ENCODE measurements at regions of chr1 and their contacts with region 1.

Region 1: GRCh38 chr1:67347688-67348472 is 40.2 kb downstream of the IL12RB2 start:
- DNase-seq: peak; percentile 61
- ATAC-seq: peak; percentile 91
- H3K4me3 ChIP-seq: no peak overlapping the region; the same call in 1 of the 2 replicates
- H3K27ac ChIP-seq: no peak overlapping the region
- H3K4me1 ChIP-seq: no peaks in the 10 kb centered on the region
- H3K27me3 ChIP-seq: peaks cover 4% of the 10 kb centered on the region
- CTCF ChIP-seq: peak; percentile 69
- POLR2A ChIP-seq: no peak
- RAD21 ChIP-seq: peak; percentile 70

Region 2: GRCh38 chr1:67285780-67286488 is 61.9 kb before region 1 on chr1:
- CTCF ChIA-PET with region 1: no interaction called
- POLR2A ChIA-PET with region 1: no interaction called
- dilution Hi-C with region 1: no loop called
- in situ Hi-C with region 1: no loop called
- intact Hi-C with region 1: no loop called
- DNase-seq: no peak
- ATAC-seq: no peak
- H3K4me3 ChIP-seq: no peak overlapping the region
- H3K27ac ChIP-seq: no peak overlapping the region
- H3K4me1 ChIP-seq: no peaks in the 10 kb centered on the region
- H3K27me3 ChIP-seq: peaks cover 1% of the 10 kb centered on the region
- CTCF ChIP-seq: no peak
- POLR2A ChIP-seq: no peak
- RAD21 ChIP-seq: no peak

Region 3: DNA sequence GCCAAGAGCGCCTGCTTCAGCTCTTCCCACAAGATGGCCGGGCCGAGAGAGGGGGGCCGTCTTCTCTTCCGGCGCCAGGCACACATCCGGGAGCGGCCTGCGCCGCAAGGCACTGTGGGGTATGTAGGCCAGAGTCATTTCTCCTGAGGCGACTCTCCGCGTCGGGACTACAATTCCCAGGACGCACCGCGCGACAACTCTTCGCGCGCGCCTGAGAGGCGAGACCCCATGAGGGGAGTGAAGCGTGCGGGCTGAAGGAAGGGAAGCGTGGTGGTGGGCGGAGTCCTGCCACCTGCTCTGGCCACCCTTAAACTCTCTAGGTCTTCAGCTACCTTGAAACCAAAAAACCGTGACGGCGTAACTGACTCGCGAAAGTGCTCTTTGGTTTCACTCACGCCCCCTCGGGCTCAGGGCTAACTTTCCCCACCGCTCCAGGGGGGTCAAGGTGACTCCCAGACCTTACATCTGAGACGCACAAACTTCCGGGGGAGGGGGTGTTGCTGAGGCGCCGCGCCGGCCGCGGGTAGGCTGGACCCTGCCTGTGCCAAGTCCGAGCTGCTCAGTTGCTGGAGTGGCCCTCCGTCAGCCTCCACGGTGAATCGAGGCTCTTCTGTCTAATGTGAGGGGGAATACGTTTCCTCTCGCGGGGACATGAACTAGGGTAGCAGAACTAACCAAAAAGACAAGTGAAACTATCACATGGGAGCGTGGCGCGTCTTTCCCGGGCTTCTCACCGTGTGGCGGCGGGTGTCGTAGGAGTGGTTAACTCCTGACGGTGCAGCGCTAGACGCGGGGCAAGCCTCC is 82.7 kb after region 1 on chr1 and contains the start of gene SERBP1:
- CTCF ChIA-PET with region 1: interaction called, 3 read pairs
- POLR2A ChIA-PET with region 1: no interaction called
- dilution Hi-C with region 1: no loop called
- in situ Hi-C with region 1: no loop called
- intact Hi-C with region 1: loop called (anchors 2 kb)
- DNase-seq: peak; percentile 96
- ATAC-seq: peak; percentile 95
- H3K4me3 ChIP-seq: peak within 1 kb of the TSS; percentile 99
- H3K27ac ChIP-seq: peak within 1 kb of the TSS; percentile 81
- H3K4me1 ChIP-seq: no peaks in the 10 kb centered on the region
- H3K27me3 ChIP-seq: no peaks in the 10 kb centered on the region
- CTCF ChIP-seq: no peak
- POLR2A ChIP-seq: peak; percentile 83
- RAD21 ChIP-seq: no peak
- total RNA-seq, gene SERBP1: 94.1 and 240 TPM in 2 replicates

Region 4: GRCh38 chr1:67489643-67490042 is 141.8 kb after region 1 on chr1:
- CTCF ChIA-PET with region 1: no interaction called
- POLR2A ChIA-PET with region 1: no interaction called
- dilution Hi-C with region 1: no loop called
- in situ Hi-C with region 1: no loop called
- intact Hi-C with region 1: loop called (anchors 1 kb)
- DNase-seq: peak; percentile 15
- ATAC-seq: no peak
- H3K4me3 ChIP-seq: no peak overlapping the region
- H3K27ac ChIP-seq: no peak overlapping the region
- H3K4me1 ChIP-seq: no peaks in the 10 kb centered on the region
- H3K27me3 ChIP-seq: peaks cover 14% of the 10 kb centered on the region
- CTCF ChIP-seq: peak; percentile 21; the same call in 1 of the 2 replicates
- POLR2A ChIP-seq: no peak
- RAD21 ChIP-seq: peak; percentile 36

Region 5: DNA sequence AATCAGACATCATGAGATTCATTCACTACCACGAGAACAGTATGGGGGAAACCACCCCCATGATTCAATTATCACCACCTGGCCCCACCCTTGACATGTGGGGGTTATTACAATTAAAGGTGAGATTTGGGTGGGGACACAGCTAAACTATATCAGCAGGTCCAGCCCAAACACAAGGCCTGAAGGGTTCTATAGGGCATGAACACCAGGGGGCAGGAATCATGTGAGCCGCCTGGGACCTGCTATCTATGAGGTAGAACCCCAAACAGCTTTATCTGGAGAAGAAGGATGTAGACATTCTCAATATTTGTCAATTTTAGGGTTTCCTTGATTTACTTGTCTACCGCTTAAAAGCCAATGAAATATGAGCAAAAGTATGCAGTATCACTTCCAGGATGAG is 1443.9 kb after region 1 on chr1:
- CTCF ChIA-PET with region 1: no interaction called
- POLR2A ChIA-PET with region 1: no interaction called
- dilution Hi-C with region 1: no loop called
- in situ Hi-C with region 1: no loop called
- intact Hi-C with region 1: no loop called
- DNase-seq: no peak
- ATAC-seq: no peak
- H3K4me3 ChIP-seq: no peak overlapping the region
- H3K27ac ChIP-seq: no peak overlapping the region
- H3K4me1 ChIP-seq: no peaks in the 10 kb centered on the region
- H3K27me3 ChIP-seq: no peaks in the 10 kb centered on the region
- CTCF ChIP-seq: no peak
- POLR2A ChIP-seq: no peak
- RAD21 ChIP-seq: no peak

Measured in IMR-90 (cell line).